AG04449 (cell line): ENCODE measurements at regions of chr21 and their contacts with region 1.

Region 1: GRCh38 chr21:36113647-36114428 is 21.0 kb upstream of the CBR3 start:
- DNase-seq: no peak
- H3K4me3 ChIP-seq: no peak overlapping the region
- CTCF ChIP-seq: no peak

Region 2: GRCh38 chr21:35743571-35743970 is 370.3 kb before region 1 on chr21:
- CTCF ChIA-PET with region 1: no interaction called
- POLR2A ChIA-PET with region 1: no interaction called
- DNase-seq: no peak
- H3K4me3 ChIP-seq: no peak overlapping the region
- CTCF ChIP-seq: no peak

Region 3: GRCh38 chr21:36069713-36070573 is 43.9 kb before region 1 on chr21 and contains the start of gene CBR1:
- CTCF ChIA-PET with region 1: interaction called, 11 read pairs
- POLR2A ChIA-PET with region 1: no interaction called
- DNase-seq: peak; percentile 58
- H3K4me3 ChIP-seq: peak within 1 kb of the TSS; percentile 97
- CTCF ChIP-seq: no peak

Region 4: DNA sequence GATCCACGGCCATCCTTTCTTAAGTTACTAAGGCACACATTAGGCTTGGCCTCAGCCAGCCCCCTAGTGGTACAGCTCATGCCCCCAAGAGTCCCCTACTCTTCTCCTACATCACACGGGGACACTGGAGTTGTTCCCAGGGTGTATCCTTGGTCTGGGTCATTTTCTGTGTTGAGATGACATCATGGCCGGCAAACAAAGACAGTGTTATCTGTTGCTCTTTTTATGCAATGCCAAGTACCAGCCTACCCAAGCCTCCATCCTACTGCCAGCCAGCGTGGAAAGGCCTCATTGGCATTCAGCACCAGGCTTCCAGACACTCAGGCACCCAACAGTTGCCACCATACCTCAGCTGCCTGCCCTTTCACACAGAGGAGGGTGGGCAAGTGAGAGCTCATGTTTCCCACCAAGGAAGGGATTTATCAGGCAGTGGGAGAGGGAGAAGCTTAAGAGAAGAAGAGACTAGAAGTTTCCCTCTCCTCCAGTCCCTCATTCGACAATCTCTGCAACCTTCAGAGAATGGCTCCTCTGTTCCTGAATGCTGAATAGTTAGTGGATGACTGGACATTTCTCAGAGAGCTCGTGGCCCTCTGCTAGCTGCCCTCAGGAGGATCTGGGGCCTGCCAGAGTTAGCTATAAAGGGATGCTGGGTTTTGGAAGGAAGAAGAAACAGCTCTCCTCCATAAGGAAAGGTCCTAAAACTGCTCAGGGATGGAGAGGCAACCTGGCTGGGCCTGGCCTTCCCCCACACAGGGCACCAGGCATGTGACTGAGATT is 26.3 kb before region 1 on chr21:
- CTCF ChIA-PET with region 1: interaction called, 12 read pairs
- POLR2A ChIA-PET with region 1: no interaction called
- DNase-seq: no peak
- H3K4me3 ChIP-seq: no peak overlapping the region
- CTCF ChIP-seq: no peak

Region 5: GRCh38 chr21:36125512-36126222 is 11.8 kb after region 1 on chr21:
- CTCF ChIA-PET with region 1: interaction called, 100 read pairs
- POLR2A ChIA-PET with region 1: no interaction called
- DNase-seq: no peak
- H3K4me3 ChIP-seq: no peak overlapping the region
- CTCF ChIP-seq: peak; percentile 84

Region 6: GRCh38 chr21:36135391-36136102 is 21.7 kb after region 1 on chr21:
- CTCF ChIA-PET with region 1: interaction called, 11 read pairs
- POLR2A ChIA-PET with region 1: no interaction called
- DNase-seq: no peak
- H3K4me3 ChIP-seq: peak overlapping the region; percentile 76
- CTCF ChIP-seq: no peak